Natural killer cell (primary cell): ENCODE measurements at regions of chr18 and their contacts with region 1.

Region 1: GRCh38 chr18:35972197-35973052 is at the start of gene RMP24:
- DNase-seq: peak; percentile 88 to 97
- ATAC-seq: peak; percentile 90 to 95 (median 91)
- H3K4me3 ChIP-seq: peak within 1 kb of the TSS; percentile 85
- H3K4me3 Mint-ChIP-seq: peak within 1 kb of the TSS; percentile 93
- H3K27ac ChIP-seq: peak within 1 kb of the TSS; percentile 83
- H3K27ac Mint-ChIP-seq: peak within 1 kb of the TSS; percentile 89 to 92
- H3K4me1 ChIP-seq: peaks cover 26% of the 10 kb centered on the region
- H3K4me1 Mint-ChIP-seq: peaks cover 44 to 47% of the 10 kb centered on the region in 2 donors
- H3K27me3 ChIP-seq: no peaks in the 10 kb centered on the region
- H3K27me3 Mint-ChIP-seq: no peaks in the 10 kb centered on the region
- CTCF ChIP-seq: no peak

Region 2: GRCh38 chr18:36067055-36067957 is 94.9 kb after region 1 on chr18 and contains the start of gene RPRD1A:
- intact Hi-C with region 1: loop called (anchors 1 kb)
- DNase-seq: peak; percentile 96 to 97
- ATAC-seq: peak; percentile 88 to 94 (median 91)
- H3K4me3 ChIP-seq: peak within 1 kb of the TSS; percentile 62
- H3K4me3 Mint-ChIP-seq: peak within 1 kb of the TSS; percentile 97
- H3K27ac ChIP-seq: peak within 1 kb of the TSS; percentile 64
- H3K27ac Mint-ChIP-seq: peak within 1 kb of the TSS; percentile 88 to 98
- H3K4me1 ChIP-seq: peaks cover 4% of the 10 kb centered on the region
- H3K4me1 Mint-ChIP-seq: peaks cover 34 to 43% of the 10 kb centered on the region in 2 donors
- H3K27me3 ChIP-seq: no peaks in the 10 kb centered on the region
- H3K27me3 Mint-ChIP-seq: peaks cover 0 to 3% of the 10 kb centered on the region in 2 donors
- CTCF ChIP-seq: no peak
- total RNA-seq, gene RPRD1A: 20.4 to 24.4 (median 23.3) TPM

Region 3: DNA sequence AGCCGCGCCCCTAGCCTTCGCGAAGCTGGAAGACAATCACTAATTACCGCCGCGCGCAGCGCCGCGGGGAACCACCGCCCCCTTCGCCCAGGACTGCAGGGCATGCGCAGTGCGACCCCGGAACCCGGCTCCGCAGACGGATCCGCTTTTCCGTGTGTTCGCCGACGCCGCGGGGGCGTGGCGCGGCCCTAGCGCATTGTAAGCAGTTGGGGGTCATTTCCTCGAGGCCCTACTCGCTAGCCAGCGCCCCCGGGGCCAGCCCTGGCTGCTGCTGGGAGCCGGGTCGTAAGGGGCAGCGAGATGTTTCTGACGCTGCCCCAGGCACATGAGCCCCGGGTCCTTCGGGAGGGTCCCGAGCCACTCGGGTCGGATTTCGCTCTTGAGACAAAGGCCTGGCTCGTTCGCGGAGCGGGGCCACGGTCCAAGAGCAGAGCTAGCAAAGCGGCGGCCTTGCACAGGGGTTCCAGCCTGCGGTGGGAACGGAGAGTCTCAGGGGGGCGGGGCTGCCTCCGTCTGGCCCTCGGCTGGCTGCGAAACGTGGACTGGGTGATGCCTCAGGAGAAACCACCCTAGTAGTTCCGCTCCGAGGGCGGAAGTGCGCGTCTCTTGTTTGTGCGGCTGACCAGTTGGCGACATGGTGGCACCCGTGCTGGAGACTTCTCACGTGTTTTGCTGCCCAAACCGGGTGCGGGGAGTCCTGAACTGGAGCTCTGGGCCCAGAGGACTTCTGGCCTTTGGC is 157.0 kb after region 1 on chr18 and contains the starts of genes ELP2 and SLC39A6:
- intact Hi-C with region 1: loop called (anchors 2 kb)
- DNase-seq: peak; percentile 96 to 99
- ATAC-seq: peak; percentile 86 to 94 (median 88)
- H3K4me3 ChIP-seq: peak within 1 kb of the TSS; percentile 90
- H3K4me3 Mint-ChIP-seq: peak within 1 kb of the TSS; percentile 95
- H3K27ac ChIP-seq: peak within 1 kb of the TSS; percentile 98
- H3K27ac Mint-ChIP-seq: peak within 1 kb of the TSS; percentile 96 to 97
- H3K4me1 ChIP-seq: peaks cover 36% of the 10 kb centered on the region
- H3K4me1 Mint-ChIP-seq: peaks cover 38 to 58% of the 10 kb centered on the region in 2 donors
- H3K27me3 ChIP-seq: no peaks in the 10 kb centered on the region
- H3K27me3 Mint-ChIP-seq: no peaks in the 10 kb centered on the region
- CTCF ChIP-seq: no peak
- total RNA-seq, gene ELP2: 119 to 135 (median 129) TPM
- total RNA-seq, gene SLC39A6: 15.2 to 18.8 (median 18.1) TPM

Region 4: DNA sequence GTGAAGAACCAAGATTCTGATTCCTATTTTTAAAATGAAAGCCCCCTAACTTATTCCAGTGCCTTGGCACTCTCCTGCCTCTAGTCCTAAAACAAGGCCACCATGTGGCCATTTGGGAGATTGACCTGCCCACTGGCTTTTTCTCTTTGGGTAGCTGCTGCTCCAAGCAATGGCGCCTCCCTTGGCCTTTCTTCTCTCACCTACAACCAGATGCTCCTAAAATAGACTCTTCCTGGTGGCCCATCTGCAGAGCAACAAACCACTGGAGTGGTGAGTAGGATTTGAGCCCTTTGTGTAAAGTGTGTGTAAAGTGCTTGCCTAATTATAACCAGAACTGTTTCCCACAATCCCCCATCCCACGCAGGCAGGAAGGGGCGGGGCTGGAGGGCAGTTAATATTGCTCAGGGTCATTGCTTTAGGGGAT is 439.3 kb after region 1 on chr18:
- intact Hi-C with region 1: no loop called
- DNase-seq: no peak
- ATAC-seq: no peak
- H3K4me3 ChIP-seq: no peak overlapping the region
- H3K4me3 Mint-ChIP-seq: no peak overlapping the region
- H3K27ac ChIP-seq: no peak overlapping the region
- H3K27ac Mint-ChIP-seq: no peak overlapping the region
- H3K4me1 ChIP-seq: no peaks in the 10 kb centered on the region
- H3K4me1 Mint-ChIP-seq: no peaks in the 10 kb centered on the region
- H3K27me3 ChIP-seq: no peaks in the 10 kb centered on the region
- H3K27me3 Mint-ChIP-seq: peaks cover 3 to 8% of the 10 kb centered on the region in 2 donors
- CTCF ChIP-seq: no peak

Region 5: GRCh38 chr18:36828630-36829361 is 856.4 kb after region 1 on chr18 and contains the starts of genes KIAA1328 and TPGS2:
- intact Hi-C with region 1: loop called (anchors 5 kb)
- DNase-seq: peak; percentile 82 to 93
- ATAC-seq: peak; percentile 92 to 97 (median 92)
- H3K4me3 ChIP-seq: peak within 1 kb of the TSS; percentile 93
- H3K4me3 Mint-ChIP-seq: peak within 1 kb of the TSS; percentile 84
- H3K27ac ChIP-seq: peak within 1 kb of the TSS; percentile 80
- H3K27ac Mint-ChIP-seq: peak within 1 kb of the TSS; percentile 72 to 76
- H3K4me1 ChIP-seq: peaks cover 17% of the 10 kb centered on the region
- H3K4me1 Mint-ChIP-seq: peaks cover 23 to 40% of the 10 kb centered on the region in 2 donors
- H3K27me3 ChIP-seq: no peaks in the 10 kb centered on the region
- H3K27me3 Mint-ChIP-seq: no peaks in the 10 kb centered on the region
- CTCF ChIP-seq: peak; percentile 55
- total RNA-seq, gene KIAA1328: 12.3 to 14.3 (median 13.2) TPM
- total RNA-seq, gene TPGS2: 27.0 to 36.0 (median 33.7) TPM